AG04450 (cell line): ENCODE measurements at regions of chr7 and their contacts with region 1.

Region 1: DNA sequence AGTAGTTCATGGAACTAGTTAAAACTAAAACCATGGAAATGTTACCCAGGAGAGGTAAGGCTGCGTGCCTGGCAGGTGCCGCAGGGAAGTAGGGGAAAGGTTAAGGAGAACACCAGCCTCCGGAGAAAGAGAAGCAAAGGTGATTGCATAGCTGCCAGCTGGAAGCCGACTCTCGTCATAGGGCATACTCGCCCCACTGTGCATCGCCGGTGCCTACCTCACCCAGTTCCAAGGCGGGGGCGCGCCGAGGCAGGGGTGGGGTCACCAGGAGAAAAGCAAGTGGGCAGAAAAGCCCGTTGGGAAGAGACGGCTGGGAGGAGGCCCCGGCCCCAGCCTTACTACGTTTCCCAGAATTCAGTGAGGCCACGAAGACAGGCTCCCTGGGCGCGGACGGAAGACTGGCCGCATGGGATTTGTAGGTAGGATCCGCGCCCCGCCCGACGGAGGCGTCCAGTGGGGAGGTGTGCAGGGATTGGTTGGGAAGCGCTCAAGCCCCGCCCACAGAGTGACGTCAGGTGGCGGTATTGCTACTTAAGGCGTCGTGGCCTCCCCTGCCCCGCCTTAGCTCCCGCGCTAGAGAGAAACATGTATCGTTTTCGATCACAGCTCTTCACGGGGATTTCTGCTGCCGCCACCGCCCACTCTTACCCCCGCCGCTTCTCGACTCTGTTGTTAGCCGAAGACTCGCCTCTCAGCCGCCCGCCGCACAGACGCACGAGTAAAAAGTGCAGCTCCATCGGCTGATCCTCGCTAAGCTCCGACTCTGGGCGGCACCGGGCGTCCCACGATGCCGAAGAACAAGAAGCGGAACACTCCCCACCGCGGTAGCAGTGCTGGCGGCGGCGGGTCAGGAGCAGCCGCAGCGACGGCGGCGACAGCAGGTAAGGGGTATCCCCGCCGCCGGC is at the start of gene IFRD1:
- DNase-seq: peak; percentile 98
- H3K4me3 ChIP-seq: peak within 1 kb of the TSS; percentile 97
- H3K27ac ChIP-seq: peak within 1 kb of the TSS; percentile 94
- H3K27me3 ChIP-seq: no peaks in the 10 kb centered on the region
- CTCF ChIP-seq: no peak
- polyA plus RNA-seq, gene IFRD1: 35.4 and 46.9 TPM in 2 replicates

Region 2: DNA sequence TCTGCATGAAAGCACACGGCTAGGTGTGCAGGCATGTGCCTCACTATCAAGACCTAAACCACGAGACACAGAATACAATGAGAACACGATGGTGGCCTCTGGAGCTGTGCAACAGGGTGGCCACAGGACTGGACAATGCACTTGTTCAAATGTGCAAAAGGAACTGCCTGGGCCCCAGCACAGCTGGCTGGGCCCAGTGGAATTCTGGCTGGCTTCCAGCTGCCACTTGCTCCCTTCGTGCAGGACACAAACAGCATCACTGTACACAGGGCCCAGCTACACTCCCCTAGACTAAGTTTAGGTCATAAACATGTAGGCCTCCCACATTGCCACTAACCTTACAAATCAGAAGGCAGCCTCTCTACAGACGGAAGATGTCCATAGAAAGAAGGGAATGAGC is 267.4 kb before region 1 on chr7:
- CTCF ChIA-PET with region 1: no interaction called
- POLR2A ChIA-PET with region 1: no interaction called
- DNase-seq: no peak
- H3K4me3 ChIP-seq: no peak overlapping the region
- H3K27ac ChIP-seq: no peak overlapping the region
- H3K27me3 ChIP-seq: no peaks in the 10 kb centered on the region
- CTCF ChIP-seq: no peak

Region 3: DNA sequence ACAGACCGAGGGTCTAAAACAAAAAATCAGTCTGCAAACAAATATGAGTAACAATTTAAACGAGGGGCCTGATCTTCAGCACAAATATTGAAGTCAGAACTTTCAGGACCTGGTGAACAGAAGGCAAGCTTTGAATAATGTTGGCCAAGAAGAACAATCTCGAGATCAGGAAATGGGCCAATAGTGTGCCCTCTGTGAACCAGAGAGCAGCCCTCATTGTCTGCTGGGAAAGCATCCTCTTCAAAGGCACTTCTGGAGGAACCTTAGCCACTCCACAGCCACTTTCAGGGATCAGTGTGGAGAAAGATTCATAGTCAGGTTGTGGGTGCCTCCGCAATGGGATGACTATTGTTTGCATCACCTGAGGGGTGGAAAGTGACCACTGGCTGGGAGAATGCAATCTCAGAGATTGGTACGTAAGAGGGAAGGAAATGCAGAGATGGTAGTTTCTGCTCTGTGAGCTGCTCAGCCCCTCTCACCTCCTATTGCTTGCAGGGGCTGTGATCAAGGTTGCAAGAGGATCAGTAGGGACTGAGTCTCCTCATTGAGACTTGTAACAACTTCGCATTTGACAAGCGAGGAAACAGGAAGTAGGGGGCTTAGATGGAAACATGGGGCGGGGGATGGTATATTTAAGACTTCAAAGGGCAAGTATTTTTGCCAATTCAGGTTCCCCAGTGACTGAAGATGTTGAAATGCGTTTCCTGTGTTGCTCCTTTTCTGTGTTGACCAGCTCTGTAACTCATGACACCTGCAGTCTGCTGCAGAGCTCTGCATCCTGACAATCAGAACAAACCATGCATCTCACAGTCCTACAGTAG is 28.3 kb before region 1 on chr7:
- CTCF ChIA-PET with region 1: no interaction called
- POLR2A ChIA-PET with region 1: interaction called, 16 read pairs
- DNase-seq: no peak
- H3K4me3 ChIP-seq: no peak overlapping the region
- H3K27ac ChIP-seq: no peak overlapping the region
- H3K27me3 ChIP-seq: no peaks in the 10 kb centered on the region
- CTCF ChIP-seq: no peak

Region 4: DNA sequence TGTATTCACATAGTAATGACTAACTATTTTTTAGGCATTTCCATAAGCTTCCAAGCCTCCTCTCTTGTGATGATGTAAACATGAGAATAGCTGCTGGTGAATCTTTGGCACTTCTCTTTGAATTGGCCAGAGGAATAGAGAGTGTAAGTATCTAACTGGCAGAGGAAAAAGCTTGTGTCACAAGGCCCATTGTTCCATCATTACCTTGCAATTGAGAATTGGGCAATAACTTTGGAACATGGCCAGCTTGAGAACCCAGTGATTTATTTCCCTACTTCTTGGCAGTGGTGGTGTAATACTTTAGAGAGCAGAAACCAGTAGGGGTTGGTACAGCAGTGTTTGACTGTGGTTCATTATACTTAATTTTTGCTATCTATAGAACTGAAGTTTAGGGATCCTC is 12.1 kb after region 1 on chr7:
- CTCF ChIA-PET with region 1: interaction called, 4 read pairs
- POLR2A ChIA-PET with region 1: interaction called, 20 read pairs
- DNase-seq: no peak
- H3K4me3 ChIP-seq: no peak overlapping the region
- H3K27ac ChIP-seq: no peak overlapping the region
- H3K27me3 ChIP-seq: no peaks in the 10 kb centered on the region
- CTCF ChIP-seq: no peak

Region 5: DNA sequence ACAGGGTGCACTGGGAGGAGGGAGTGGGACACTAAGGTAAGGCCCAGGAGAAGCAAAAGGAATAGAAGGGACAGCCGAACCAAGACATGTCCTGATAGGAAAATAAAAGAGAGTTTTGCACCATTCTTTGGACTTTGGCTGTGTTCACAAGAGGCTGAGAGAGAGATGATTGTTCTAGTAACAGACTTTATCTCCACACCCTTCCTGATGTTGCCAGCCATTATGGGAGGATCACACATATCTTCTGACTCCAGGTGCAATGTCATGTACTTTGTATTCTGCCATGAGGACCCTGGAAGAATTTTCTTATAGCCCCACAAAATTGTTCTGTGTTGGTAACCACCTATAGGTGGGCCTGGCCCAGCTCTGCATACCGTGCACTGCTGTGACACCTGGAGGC is 42.0 kb after region 1 on chr7:
- CTCF ChIA-PET with region 1: no interaction called
- POLR2A ChIA-PET with region 1: no interaction called
- DNase-seq: no peak
- H3K4me3 ChIP-seq: no peak overlapping the region
- H3K27ac ChIP-seq: no peak overlapping the region
- H3K27me3 ChIP-seq: no peaks in the 10 kb centered on the region
- CTCF ChIP-seq: no peak